Calu3 (cell line): ENCODE measurements at regions of chr1 and their contacts with region 1.

Region 1: DNA sequence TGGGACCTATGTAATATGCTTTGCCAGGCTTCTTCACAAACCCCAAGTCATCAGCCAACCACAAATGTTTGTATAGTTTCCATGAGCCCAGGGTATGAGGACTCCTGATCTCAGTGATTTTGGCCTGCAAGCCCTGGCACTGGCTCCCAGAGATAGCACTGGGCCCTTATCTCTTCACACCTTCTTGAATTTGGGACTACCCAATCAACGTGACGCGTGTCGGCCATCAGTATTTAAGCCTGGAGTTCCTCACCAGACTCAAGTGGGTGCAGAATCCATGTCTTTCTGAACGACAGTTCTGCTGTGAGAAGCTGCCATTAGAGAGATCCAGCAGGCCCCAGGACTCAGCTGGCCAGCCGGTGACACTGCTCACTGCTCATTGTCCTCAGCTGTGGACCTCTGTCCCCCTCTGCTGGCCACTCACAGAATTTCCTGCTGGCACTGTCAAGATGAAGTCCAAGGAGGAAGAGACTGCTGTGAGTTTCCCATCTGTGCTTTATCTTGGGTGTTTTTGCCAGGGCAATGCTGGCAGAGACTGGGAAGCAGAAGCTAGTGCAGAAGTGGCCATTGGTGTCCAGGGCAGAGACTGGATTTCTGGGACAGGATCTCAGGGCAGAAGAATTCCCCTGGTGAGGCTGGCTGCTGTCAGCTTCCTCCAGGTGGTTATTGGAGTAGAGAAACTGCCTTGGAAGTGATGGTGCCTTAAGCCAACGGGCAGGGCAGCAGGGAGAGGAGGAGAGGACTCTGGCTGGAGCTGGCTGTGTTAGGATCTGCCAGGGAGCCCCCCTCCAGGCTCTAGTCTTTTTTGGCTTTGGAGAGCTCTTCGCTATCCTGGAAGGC is 28.4 kb downstream of the TMCC2 start:
- DNase-seq: peak; percentile 95
- H3K4me3 Mint-ChIP-seq: no peak overlapping the region
- H3K27ac Mint-ChIP-seq: no peak overlapping the region
- H3K4me1 Mint-ChIP-seq: no peaks in the 10 kb centered on the region
- H3K27me3 Mint-ChIP-seq: peaks cover 76% of the 10 kb centered on the region
- CTCF ChIP-seq: peak; percentile 99

Region 2: GRCh38 chr1:204975570-204976235 is 280.5 kb before region 1 on chr1:
- CTCF ChIA-PET with region 1: interaction called, 7 read pairs
- intact Hi-C with region 1: loop called (anchors 1 kb)
- DNase-seq: peak; percentile 82
- H3K4me3 Mint-ChIP-seq: no peak overlapping the region
- H3K27ac Mint-ChIP-seq: no peak overlapping the region
- H3K4me1 Mint-ChIP-seq: no peaks in the 10 kb centered on the region
- H3K27me3 Mint-ChIP-seq: peaks cover 99% of the 10 kb centered on the region
- CTCF ChIP-seq: peak; percentile 69

Region 3: DNA sequence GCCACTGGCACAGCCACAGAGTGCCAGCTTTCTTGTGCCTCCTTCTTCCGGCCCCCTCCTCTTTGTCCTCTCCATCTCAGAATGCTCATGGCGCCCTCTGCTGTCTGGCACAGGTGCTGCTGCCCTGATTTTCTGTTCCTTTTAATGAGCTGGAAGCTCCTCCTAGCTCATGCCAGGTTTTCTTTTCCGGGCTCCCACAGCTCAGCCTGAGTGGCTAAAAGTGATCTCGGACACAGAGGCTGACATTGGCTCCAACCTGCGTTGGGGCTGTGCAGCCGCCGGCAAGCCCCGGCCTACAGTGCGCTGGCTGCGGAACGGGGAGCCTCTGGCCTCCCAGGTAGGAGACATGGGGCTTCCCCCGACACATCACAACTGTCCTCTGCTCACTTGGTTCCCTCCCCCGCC is 194.5 kb before region 1 on chr1:
- CTCF ChIA-PET with region 1: interaction called, 11 read pairs
- intact Hi-C with region 1: loop called (anchors 2 kb)
- DNase-seq: peak; percentile 84
- H3K4me3 Mint-ChIP-seq: no peak overlapping the region
- H3K27ac Mint-ChIP-seq: no peak overlapping the region
- H3K4me1 Mint-ChIP-seq: no peaks in the 10 kb centered on the region
- H3K27me3 Mint-ChIP-seq: peaks cover 69% of the 10 kb centered on the region
- CTCF ChIP-seq: peak; percentile 89

Region 4: DNA sequence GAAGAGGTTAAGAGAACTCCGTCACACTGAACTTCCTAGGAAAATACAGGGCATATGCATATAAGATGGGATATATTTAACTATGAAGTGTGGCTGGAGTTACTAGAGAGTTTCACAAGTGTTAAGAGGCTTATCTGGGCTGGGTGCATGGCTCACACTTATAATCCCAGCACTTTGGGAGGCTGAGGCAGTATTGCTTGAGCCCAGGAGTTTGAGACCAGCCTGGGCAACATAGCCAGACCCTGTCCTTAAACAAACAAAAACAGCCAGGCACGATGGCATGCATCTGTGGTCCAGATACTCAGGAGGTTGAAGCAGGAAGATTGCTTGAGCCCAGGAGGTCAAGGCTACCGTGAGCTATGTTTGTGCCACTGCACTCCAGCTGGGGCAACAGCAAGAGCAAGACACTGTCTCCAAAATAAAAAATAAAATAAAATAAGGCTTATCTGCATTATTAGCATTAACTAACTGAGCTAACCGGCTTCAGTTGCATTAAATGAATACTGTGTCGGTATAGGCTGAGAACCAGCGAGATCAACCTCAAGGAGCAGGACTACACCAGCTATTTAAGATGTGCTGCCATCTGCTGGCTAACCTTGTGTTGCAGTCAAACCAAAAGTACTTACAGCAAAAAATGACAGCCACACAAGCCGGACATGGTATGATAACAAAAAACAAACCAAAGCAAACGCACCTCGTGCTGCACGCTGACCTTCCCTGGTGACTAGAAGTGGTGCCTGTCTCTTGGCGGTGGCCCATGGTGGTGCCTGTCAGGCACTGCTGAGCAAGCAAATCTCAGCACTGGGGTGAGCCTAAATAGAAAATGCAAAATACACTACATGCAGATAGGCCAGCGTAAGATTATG is 114.7 kb before region 1 on chr1:
- CTCF ChIA-PET with region 1: interaction called, 7 read pairs
- intact Hi-C with region 1: loop called (anchors 5 kb)
- DNase-seq: peak; percentile 78
- H3K4me3 Mint-ChIP-seq: peak overlapping the region; percentile 25
- H3K27ac Mint-ChIP-seq: no peak overlapping the region
- H3K4me1 Mint-ChIP-seq: no peaks in the 10 kb centered on the region
- H3K27me3 Mint-ChIP-seq: no peaks in the 10 kb centered on the region
- CTCF ChIP-seq: peak; percentile 67

Region 5: DNA sequence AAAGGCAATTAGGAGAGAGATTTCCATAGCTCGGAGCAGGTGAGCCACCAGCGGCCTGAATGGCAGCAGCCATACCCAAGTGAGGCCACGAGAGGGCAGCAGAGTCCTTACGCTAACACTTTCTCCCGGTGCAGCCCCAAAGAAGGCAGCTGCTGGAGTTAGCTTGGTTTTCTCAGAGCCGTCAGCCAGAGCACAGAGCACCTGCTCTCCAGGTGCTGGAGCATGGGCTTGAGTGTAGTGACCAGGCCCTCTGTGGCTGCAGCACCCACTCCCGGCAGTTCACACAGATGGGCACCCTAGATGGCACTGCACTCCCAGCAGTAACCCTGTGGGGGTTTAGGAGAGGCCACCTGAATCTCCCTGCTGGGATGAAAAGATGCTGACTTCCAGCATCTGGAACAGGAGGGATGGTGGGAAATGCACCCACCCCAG is 17.4 kb after region 1 on chr1:
- CTCF ChIA-PET with region 1: interaction called, 10 read pairs
- intact Hi-C with region 1: no loop called
- DNase-seq: peak; percentile 91
- H3K4me3 Mint-ChIP-seq: no peak overlapping the region
- H3K27ac Mint-ChIP-seq: no peak overlapping the region
- H3K4me1 Mint-ChIP-seq: peaks cover 18% of the 10 kb centered on the region
- H3K27me3 Mint-ChIP-seq: peaks cover 42% of the 10 kb centered on the region
- CTCF ChIP-seq: peak; percentile 93

Region 6: DNA sequence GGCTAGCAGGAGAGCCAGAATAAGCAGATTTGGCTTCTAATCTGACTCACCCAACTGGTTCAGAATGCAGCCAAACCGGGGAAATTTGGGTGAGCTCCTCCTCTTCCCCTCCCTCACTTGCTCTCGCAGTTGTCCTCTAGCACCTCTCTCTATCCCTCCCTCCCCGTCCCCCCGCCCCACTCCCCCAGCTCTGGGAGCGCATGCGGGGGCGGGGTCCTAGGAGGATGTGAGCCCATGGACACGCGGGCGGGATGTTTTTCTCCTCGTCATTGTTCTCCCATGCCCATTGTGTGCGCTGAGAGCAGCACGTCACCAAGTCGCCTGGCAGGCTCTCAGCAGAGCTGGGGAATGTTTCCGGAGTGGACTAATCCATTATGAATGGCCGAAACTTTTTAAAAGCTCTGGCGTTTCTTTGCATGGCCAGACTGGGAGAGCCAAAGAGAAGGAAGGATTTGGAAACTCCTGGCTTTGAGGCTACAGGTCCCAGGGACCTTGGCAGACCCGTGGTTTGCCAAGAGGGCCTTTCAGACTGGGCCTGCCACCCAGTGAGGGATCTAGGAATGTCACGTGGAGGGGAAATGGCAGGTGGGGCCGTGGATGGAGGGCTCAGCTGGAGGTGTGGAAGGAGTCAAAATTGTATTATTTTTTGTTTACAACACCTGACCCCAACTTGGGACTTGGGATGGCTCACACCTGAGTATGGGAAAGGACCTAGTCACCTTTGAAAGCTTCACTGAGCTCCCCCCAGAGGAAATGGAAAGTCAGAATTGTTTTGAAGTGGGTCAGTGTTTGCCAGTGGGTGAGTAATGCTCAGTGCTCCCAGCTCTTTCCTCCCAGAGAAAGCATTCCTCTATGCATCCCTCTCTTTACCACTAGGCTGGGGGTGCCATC is 287.5 kb after region 1 on chr1:
- CTCF ChIA-PET with region 1: no interaction called
- intact Hi-C with region 1: no loop called
- DNase-seq: peak; percentile 82
- H3K4me3 Mint-ChIP-seq: peak overlapping the region; percentile 63
- H3K27ac Mint-ChIP-seq: peak overlapping the region; percentile 83
- H3K4me1 Mint-ChIP-seq: peaks cover 27% of the 10 kb centered on the region
- H3K27me3 Mint-ChIP-seq: peaks cover 8% of the 10 kb centered on the region
- CTCF ChIP-seq: no peak